ENCODE measurements at regions of chr3 and their contacts with region 1.

Region 1: GRCh38 chr3:72447059-72447946 is 400.9 kb downstream of the SHQ1 start:
- DNase-seq: peak; percentile 97
- ATAC-seq: peak; percentile 96
- H3K4me3 Mint-ChIP-seq: peak overlapping the region; percentile 78
- H3K27ac Mint-ChIP-seq: peak overlapping the region; percentile 31
- H3K4me1 Mint-ChIP-seq: peaks cover 47% of the 10 kb centered on the region
- H3K27me3 Mint-ChIP-seq: peaks cover 17% of the 10 kb centered on the region
- CTCF ChIP-seq: no peak

Region 2: DNA sequence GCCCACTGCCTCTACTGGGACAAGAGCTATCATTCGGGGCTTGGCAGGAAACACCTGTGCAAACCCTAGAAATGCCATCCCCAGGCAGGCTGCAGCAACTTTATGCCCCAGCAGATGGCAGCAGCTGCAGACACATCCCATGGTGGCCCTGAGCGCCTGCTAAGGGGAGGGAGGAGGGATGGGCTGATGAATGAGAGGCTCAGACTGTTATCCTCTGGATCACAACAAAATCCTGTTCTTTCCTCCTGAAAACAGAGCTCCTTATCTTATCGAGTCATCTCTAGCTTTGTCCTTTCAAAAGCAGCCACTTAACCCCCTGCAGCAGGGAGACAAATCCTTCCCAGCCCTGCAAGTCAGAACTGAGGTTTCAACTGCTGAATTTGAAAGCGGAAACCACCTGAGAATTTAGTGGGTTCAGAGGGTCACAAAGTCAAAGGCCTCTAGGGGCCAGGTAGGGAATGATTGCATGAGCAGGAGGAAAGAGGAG is 571.8 kb before region 1 on chr3:
- CTCF ChIA-PET with region 1: interaction called, 3 read pairs
- POLR2A ChIA-PET with region 1: no interaction called
- intact Hi-C with region 1: loop called (anchors 1 kb)
- DNase-seq: peak; percentile 70
- ATAC-seq: peak; percentile 99
- H3K4me3 Mint-ChIP-seq: no peak overlapping the region
- H3K27ac Mint-ChIP-seq: no peak overlapping the region
- H3K4me1 Mint-ChIP-seq: peaks cover 13% of the 10 kb centered on the region
- H3K27me3 Mint-ChIP-seq: peaks cover 31% of the 10 kb centered on the region
- CTCF ChIP-seq: no peak

Region 3: GRCh38 chr3:72177083-72178050 is 269.9 kb before region 1 on chr3:
- CTCF ChIA-PET with region 1: no interaction called
- POLR2A ChIA-PET with region 1: no interaction called
- intact Hi-C with region 1: loop called (anchors 5 kb)
- DNase-seq: peak; percentile 35
- ATAC-seq: peak; percentile 20
- H3K4me3 Mint-ChIP-seq: peak overlapping the region; percentile 79
- H3K27ac Mint-ChIP-seq: peak overlapping the region; percentile 75
- H3K4me1 Mint-ChIP-seq: peaks cover 64% of the 10 kb centered on the region
- H3K27me3 Mint-ChIP-seq: peaks cover 2% of the 10 kb centered on the region
- CTCF ChIP-seq: no peak

Region 4: DNA sequence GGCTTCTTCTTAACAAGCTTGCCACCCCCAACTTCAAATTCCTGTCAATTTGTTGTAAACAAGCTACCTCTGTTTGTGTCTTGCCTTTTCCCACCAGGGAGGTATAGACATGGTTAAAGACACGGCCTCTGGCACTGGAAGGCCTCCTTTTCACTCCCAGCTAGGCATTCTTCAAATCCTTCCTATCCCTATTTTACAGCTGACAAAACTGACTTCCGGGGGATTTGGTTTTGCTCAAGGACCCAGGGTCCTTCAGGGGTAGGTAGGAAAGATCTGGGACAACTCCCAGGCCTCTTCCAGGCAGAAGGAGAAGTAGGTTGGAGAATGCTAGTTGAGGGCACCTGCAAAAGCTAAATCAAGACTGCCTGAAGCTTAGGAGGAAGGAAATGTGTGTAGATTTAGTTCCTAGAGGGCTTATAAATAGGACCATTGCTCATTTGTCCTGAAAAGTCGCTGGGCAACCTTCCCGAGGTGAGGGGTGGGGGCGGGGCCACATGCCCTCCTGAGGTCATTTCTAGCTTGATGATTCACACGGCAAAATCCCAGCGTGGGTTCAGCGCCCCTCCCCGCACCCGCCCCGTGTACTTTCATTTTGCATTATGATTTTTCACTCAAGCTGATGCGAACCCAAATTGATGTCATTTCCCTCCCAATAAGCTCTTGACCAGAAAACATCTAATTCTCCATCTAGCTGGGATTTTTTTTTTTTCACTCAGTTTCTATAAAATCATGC is 35.5 kb after region 1 on chr3:
- CTCF ChIA-PET with region 1: no interaction called
- POLR2A ChIA-PET with region 1: no interaction called
- intact Hi-C with region 1: loop called (anchors 2 kb)
- DNase-seq: no peak
- ATAC-seq: peak; percentile 80
- H3K4me3 Mint-ChIP-seq: peak overlapping the region; percentile 73
- H3K27ac Mint-ChIP-seq: peak overlapping the region; percentile 35
- H3K4me1 Mint-ChIP-seq: peaks cover 22% of the 10 kb centered on the region
- H3K27me3 Mint-ChIP-seq: peaks cover 11% of the 10 kb centered on the region
- CTCF ChIP-seq: no peak

Region 5: GRCh38 chr3:72523429-72524151 is 76.3 kb after region 1 on chr3:
- CTCF ChIA-PET with region 1: no interaction called
- POLR2A ChIA-PET with region 1: no interaction called
- intact Hi-C with region 1: loop called (anchors 2 kb)
- DNase-seq: peak; percentile 26
- ATAC-seq: peak; percentile 93
- H3K4me3 Mint-ChIP-seq: peak overlapping the region; percentile 64
- H3K27ac Mint-ChIP-seq: peak overlapping the region; percentile 80
- H3K4me1 Mint-ChIP-seq: peaks cover 42% of the 10 kb centered on the region
- H3K27me3 Mint-ChIP-seq: no peaks in the 10 kb centered on the region
- CTCF ChIP-seq: no peak

Region 6: GRCh38 chr3:72818092-72818773 is 370.9 kb after region 1 on chr3:
- CTCF ChIA-PET with region 1: no interaction called
- POLR2A ChIA-PET with region 1: no interaction called
- intact Hi-C with region 1: loop called (anchors 1 kb)
- DNase-seq: no peak
- ATAC-seq: no peak
- H3K4me3 Mint-ChIP-seq: no peak overlapping the region
- H3K27ac Mint-ChIP-seq: no peak overlapping the region
- H3K4me1 Mint-ChIP-seq: peaks cover 23% of the 10 kb centered on the region
- H3K27me3 Mint-ChIP-seq: no peaks in the 10 kb centered on the region
- CTCF ChIP-seq: no peak

Region 7: GRCh38 chr3:72996473-72997333 is 549.4 kb after region 1 on chr3 and contains the start of gene PPP4R2:
- CTCF ChIA-PET with region 1: no interaction called
- POLR2A ChIA-PET with region 1: no interaction called
- intact Hi-C with region 1: loop called (anchors 2 kb)
- DNase-seq: peak; percentile 96
- ATAC-seq: peak; percentile 90
- H3K4me3 Mint-ChIP-seq: peak within 1 kb of the TSS; percentile 89
- H3K27ac Mint-ChIP-seq: peak within 1 kb of the TSS; percentile 83
- H3K4me1 Mint-ChIP-seq: peaks cover 36% of the 10 kb centered on the region
- H3K27me3 Mint-ChIP-seq: no peaks in the 10 kb centered on the region
- CTCF ChIP-seq: no peak
- total RNA-seq, gene PPP4R2: 54.7 and 59.7 TPM in 2 replicates